ENCODE measurements at regions of chr17 and their contacts with region 1.

Region 1: DNA sequence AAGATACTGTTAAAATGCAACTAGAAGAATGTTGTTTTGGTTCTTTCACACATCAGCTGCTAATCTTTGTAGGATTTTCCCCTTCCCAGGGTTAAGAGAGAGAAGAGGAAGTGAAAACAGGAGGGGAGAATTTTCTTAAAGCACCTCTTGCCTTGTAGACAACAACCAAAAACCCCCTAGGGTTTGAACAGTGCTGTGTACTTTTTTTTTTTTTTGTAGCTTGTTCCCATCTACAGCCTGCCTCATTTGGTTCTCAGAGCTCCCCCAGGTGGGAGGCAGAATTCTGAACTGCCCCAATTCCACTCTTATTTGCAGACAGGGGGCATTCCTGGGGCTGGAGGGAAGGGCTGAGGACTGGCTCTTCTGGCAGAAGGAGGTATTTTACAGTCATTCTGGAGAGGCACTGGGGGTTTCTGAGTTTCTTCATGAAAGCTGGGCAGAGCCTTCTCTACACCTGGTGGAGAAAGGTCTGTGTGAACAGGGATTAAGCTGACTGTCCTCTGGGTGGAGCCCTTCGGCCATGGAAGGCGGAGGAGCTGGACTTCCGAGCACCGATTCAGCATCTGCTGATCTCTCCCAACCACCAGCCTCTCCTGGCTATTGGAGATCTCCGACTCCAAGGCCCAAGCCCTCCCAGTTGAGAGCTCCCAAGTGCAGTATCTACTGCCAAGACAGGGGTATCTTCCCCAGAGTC is 32.2 kb downstream of the SMARCE1 start:
- DNase-seq: peak; percentile 59
- H3K4me3 ChIP-seq: no peak overlapping the region
- H3K27ac ChIP-seq: peak overlapping the region in 1 of 4 donors; percentile 26
- H3K4me1 ChIP-seq: peaks cover 0 to 27% (median 18%) of the 10 kb centered on the region in 4 donors
- H3K27me3 ChIP-seq: no peaks in the 10 kb centered on the region
- CTCF ChIP-seq: peak; percentile 29 to 55 (median 42)
- EP300 ChIP-seq: no peak
- POLR2A ChIP-seq: no peak

Region 2: GRCh38 chr17:40219073-40219860 is 396.2 kb before region 1 on chr17 and contains the start of gene WIPF2:
- in situ Hi-C with region 1: no loop called
- intact Hi-C with region 1: no loop called
- DNase-seq: peak; percentile 99
- H3K4me3 ChIP-seq: peak within 1 kb of the TSS; percentile 66 to 91 (median 84)
- H3K27ac ChIP-seq: peak within 1 kb of the TSS; percentile 89 to 96 (median 92)
- H3K4me1 ChIP-seq: peaks cover 5 to 14% (median 11%) of the 10 kb centered on the region in 4 donors
- H3K27me3 ChIP-seq: no peaks in the 10 kb centered on the region
- CTCF ChIP-seq: peak; percentile 76 to 92 (median 87)
- EP300 ChIP-seq: no peak
- POLR2A ChIP-seq: peak; percentile 85
- total RNA-seq, gene WIPF2: 20.5 to 29.5 (median 25.3) TPM

Region 3: DNA sequence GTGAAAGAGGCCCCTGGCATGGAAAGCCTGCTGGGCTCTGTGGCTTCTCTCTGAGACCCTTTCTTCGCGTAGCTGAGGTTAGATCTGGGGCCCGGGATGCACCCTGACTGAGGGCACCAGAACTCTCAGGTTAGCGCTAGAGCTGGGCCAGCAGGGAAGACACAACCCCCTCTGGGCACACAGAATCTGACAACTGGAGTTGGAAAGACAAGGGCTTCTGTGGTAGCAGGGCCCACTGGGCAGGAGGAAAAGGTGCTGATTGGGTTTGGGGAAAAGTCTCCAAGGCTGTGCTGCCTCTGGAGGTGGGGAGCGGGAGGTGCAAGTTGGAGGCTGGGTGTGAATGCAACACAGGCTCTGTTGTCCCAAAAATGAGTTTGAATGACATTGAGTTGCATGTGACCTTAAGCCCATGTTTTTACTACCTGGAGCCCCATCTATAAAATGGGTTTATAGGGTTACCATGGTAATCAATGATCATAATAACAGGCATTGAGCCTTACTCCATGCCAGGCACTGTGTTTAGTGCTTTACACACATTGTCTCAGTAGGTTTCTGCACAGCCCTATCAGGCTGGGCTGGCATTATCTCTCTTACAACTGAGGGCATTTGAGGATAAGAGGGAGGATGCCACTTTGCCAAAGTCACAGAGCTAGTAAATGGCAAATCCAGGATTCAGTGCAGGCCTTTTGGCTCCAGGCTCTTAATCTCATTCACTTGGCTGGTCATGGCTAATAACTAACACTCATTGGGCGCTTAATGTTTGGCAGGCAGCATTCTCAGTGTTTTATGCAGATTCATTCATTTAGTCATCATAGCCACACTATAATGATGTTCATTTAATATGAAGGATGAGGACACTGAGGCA is 181.7 kb before region 1 on chr17:
- in situ Hi-C with region 1: no loop called
- intact Hi-C with region 1: no loop called
- DNase-seq: no peak
- H3K4me3 ChIP-seq: no peak overlapping the region
- H3K27ac ChIP-seq: peak overlapping the region; percentile 63 to 85 (median 74)
- H3K4me1 ChIP-seq: peaks cover 0 to 25% (median 13%) of the 10 kb centered on the region in 4 donors
- H3K27me3 ChIP-seq: no peaks in the 10 kb centered on the region
- CTCF ChIP-seq: peak; percentile 37 to 48 (median 47)
- EP300 ChIP-seq: no peak
- POLR2A ChIP-seq: no peak

Region 4: GRCh38 chr17:40559954-40560591 is 55.4 kb before region 1 on chr17:
- in situ Hi-C with region 1: no loop called
- intact Hi-C with region 1: no loop called
- DNase-seq: peak; percentile 94
- H3K4me3 ChIP-seq: peak overlapping the region in 1 of 4 donors; percentile 33
- H3K27ac ChIP-seq: peak overlapping the region; percentile 11 to 65 (median 60)
- H3K4me1 ChIP-seq: peaks cover 6 to 23% (median 9%) of the 10 kb centered on the region in 4 donors
- H3K27me3 ChIP-seq: no peaks in the 10 kb centered on the region
- CTCF ChIP-seq: peak; percentile 93 to 98 (median 96)
- EP300 ChIP-seq: no peak
- POLR2A ChIP-seq: no peak

Region 5: DNA sequence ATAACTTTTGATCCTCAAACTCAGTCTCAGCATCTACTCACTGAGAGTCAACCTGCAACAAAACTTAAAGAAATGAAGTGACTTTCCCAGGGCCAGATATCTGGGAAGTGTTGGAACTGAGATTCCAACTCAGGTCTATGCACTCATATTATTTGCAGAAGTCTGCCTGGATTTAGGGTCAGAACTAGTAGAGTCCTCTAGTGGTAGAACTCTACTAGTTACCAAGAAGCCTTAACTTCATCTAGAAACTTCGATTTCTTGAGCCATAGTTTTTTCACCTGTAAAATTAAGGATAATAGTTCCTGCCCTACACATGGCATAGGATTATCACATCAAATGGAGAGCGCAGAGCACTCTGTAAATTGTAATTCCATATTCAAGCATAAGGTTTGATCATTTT is 111.5 kb after region 1 on chr17:
- in situ Hi-C with region 1: loop called in 1 of 4 experiments (anchors 10 kb)
- intact Hi-C with region 1: no loop called
- DNase-seq: no peak
- H3K4me3 ChIP-seq: no peak overlapping the region
- H3K27ac ChIP-seq: no peak overlapping the region
- H3K4me1 ChIP-seq: no peaks in the 10 kb centered on the region
- H3K27me3 ChIP-seq: peaks cover 12% of the 10 kb centered on the region
- CTCF ChIP-seq: peak in 4 of 5 experiments; percentile 14 to 34 (median 24)
- EP300 ChIP-seq: no peak
- POLR2A ChIP-seq: no peak

Region 6: GRCh38 chr17:40791787-40792436 is 176.5 kb after region 1 on chr17:
- in situ Hi-C with region 1: loop called (anchors 5 to 25 kb)
- intact Hi-C with region 1: no loop called
- DNase-seq: no peak
- H3K4me3 ChIP-seq: no peak overlapping the region
- H3K27ac ChIP-seq: no peak overlapping the region
- H3K4me1 ChIP-seq: no peaks in the 10 kb centered on the region
- H3K27me3 ChIP-seq: peaks cover 36% of the 10 kb centered on the region
- CTCF ChIP-seq: peak; percentile 30 to 53 (median 38)
- EP300 ChIP-seq: no peak
- POLR2A ChIP-seq: no peak